Right ventricle myocardium inferior (tissue), 1 donor: ENCODE measurements at regions of chr2 and their contacts with region 1.

Region 1: GRCh38 chr2:240298803-240299709 is 136.4 kb upstream of the GPC1 start:
- DNase-seq: no peak
- ATAC-seq: no peak

Region 2: GRCh38 chr2:240259201-240259923 is 39.7 kb before region 1 on chr2:
- intact Hi-C with region 1: loop called (anchors 2 kb)
- DNase-seq: no peak
- ATAC-seq: peak; percentile 91

Region 3: DNA sequence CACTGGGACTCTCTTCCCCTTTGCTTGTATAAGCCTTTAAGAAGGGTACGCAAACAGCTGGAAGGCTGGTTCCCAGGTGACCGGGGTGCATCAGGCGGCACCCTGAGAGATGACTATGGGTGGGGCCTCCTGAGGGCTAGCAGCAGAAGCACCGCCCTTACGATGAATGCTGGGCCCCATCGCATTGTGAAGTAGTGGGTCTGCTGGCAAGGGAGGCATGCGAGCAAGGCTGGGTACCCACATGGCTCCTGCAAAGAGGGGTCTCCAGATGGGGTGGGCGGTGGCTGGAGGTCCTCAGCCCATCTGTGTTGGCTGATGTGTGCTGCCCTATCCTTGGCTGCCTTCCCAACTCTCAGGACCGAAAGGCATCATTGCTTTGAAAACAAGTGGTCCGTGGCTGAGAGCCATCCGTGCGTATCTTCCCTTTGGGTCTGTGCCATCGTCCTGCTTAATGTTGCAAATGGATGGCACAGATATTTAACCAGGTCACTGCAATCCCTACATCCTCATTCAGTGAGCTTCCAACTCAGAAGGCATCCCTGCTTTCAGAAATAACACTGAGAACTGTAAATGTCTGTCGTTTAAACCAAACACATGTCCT is 52.9 kb after region 1 on chr2:
- intact Hi-C with region 1: loop called (anchors 5 kb)
- DNase-seq: no peak
- ATAC-seq: no peak

Region 4: DNA sequence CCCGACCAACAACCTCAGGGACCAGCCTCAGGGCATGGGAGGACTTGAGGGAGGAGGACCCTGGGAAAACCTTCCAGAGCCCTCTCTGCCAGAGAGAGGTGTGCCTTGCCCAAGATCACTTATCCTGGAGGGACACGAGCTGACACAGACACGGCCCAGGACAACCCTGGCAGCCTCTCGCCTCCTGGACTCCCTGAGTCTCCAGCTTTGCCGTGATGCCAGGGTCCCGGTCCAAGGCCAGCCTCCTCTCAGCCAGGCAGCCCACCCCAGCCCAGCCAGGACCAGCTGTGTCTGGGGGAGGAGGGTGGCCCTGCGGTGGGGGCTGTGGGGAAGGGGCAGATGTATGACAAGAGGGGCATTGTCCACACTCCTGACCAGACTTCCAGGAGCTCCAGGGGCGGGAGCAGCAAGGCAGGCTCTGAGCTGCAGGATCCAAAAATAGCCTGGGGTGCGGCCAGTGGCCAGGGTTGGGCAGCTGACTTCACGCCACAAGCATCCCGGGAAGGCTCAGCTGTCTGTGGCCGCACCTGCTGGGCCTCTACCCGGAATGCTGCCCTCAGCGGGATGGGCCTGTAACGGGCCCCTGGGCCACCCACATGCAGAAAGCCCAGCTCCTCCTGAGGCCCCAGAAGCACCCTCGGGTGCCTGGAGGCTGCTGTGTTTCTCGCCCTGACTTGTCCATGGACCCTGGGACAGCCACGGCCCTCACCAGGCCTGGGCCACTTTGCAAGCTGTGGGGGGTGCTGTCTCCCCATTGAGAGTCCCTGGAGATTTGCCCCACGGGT is 70.9 kb after region 1 on chr2:
- intact Hi-C with region 1: loop called (anchors 5 kb)
- DNase-seq: peak; percentile 78
- ATAC-seq: peak; percentile 73